B cell (primary cell): ENCODE measurements at regions of chr6 and their contacts with region 1.

Region 1: DNA sequence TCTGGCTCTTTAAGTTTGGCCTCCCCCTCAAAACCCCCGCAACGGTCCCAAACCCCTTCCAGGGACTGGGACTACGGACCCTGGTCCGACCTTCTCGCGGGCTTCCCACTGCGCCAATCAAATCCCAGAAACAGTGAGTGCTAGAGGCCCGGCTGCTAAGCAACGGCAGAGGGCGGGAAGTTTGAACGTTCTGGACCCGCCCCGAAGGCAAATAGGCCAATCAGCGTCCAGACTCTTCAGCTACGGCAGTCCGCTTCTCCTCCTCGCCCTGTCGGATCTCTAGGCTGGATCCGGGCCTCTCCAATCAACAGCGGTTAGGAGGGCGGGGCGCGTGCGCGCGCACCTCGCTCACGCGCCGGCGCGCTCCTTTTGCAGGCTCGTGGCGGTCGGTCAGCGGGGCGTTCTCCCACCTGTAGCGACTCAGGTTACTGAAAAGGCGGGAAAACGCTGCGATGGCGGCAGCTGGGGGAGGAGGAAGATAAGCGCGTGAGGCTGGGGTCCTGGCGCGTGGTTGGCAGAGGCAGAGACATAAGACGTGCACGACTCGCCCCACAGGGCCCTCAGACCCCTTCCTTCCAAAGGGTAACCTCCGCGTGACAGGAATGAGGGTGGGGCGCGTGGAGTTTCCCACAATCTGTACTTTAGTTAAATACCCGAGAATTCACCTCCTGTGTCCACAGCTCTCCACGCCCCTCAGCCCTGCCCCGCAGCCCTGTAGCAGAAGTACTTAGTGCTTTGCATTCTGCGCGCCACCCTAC is at the start of gene MSH5:
- DNase-seq: peak; percentile 96
- ATAC-seq: peak; percentile 82
- H3K4me3 ChIP-seq: peak within 1 kb of the TSS; percentile 71 to 90 (median 81)
- H3K4me3 Mint-ChIP-seq: peak within 1 kb of the TSS; percentile 100
- H3K27ac ChIP-seq: peak within 1 kb of the TSS; percentile 81 to 96
- H3K27ac Mint-ChIP-seq: peak within 1 kb of the TSS; percentile 91
- H3K4me1 ChIP-seq: peaks cover 39 to 42% of the 10 kb centered on the region in 2 donors
- H3K4me1 Mint-ChIP-seq: peaks cover 60% of the 10 kb centered on the region
- H3K27me3 ChIP-seq: no peaks in the 10 kb centered on the region
- H3K27me3 Mint-ChIP-seq: no peaks in the 10 kb centered on the region
- CTCF ChIP-seq: no peak
- total RNA-seq, gene MSH5: 49.9 and 50.1 TPM in 2 replicates

Region 2: DNA sequence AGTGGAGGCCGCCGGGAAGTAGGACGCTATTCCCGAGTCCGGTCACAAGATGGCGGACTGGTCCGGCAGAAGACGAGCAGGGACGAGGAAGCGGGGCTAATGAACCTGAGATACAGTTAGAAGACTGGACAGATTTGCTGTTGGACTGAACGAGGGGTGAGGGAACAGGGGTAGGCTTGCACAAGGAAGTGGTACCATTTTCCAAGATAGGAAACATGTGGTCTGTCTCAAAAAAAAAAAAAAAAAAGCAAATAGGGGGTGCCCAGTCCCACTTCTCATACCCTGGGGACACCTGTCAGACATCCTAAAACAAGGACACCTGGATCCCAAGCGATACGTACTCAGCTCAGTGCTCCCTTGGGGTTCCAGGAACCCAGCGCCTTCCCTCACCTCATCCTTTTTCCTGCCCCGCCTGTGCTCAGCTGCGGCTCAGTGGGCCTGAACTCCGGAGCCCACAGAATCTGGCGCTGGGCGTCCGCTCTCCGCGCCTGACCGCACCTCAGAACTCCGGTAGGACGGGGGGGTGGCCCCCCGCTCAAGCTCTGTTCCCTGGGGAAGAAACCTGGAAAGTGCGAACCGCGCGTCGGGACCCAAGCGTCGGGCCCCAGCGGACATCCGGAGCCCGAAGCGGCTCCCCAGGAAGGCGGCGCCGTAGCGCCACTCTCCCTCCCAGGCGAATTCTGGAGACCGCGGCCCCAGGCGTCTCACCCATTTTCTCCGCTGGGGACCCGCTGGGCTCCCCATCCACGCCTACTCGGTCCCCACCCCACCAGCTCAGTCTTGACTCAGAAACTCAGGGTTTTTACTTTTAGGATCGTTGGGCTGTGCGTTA is 58.8 kb before region 1 on chr6 and contains the start of gene LY6G5C:
- CTCF ChIA-PET with region 1: interaction called, 4 read pairs
- POLR2A ChIA-PET with region 1: no interaction called
- intact Hi-C with region 1: loop called (anchors 2 kb)
- DNase-seq: peak; percentile 79
- ATAC-seq: peak; percentile 78
- H3K4me3 ChIP-seq: peak within 1 kb of the TSS; percentile 44 to 69 (median 53)
- H3K4me3 Mint-ChIP-seq: peak within 1 kb of the TSS; percentile 88
- H3K27ac ChIP-seq: peak within 1 kb of the TSS in 1 of 2 donors; percentile 50
- H3K27ac Mint-ChIP-seq: peak within 1 kb of the TSS; percentile 57
- H3K4me1 ChIP-seq: peaks cover 19 to 40% of the 10 kb centered on the region in 2 donors
- H3K4me1 Mint-ChIP-seq: peaks cover 43% of the 10 kb centered on the region
- H3K27me3 ChIP-seq: no peaks in the 10 kb centered on the region
- H3K27me3 Mint-ChIP-seq: no peaks in the 10 kb centered on the region
- CTCF ChIP-seq: peak; percentile 55
- total RNA-seq, gene LY6G5C: 0.76 and 2.1 TPM in 2 replicates

Region 3: DNA sequence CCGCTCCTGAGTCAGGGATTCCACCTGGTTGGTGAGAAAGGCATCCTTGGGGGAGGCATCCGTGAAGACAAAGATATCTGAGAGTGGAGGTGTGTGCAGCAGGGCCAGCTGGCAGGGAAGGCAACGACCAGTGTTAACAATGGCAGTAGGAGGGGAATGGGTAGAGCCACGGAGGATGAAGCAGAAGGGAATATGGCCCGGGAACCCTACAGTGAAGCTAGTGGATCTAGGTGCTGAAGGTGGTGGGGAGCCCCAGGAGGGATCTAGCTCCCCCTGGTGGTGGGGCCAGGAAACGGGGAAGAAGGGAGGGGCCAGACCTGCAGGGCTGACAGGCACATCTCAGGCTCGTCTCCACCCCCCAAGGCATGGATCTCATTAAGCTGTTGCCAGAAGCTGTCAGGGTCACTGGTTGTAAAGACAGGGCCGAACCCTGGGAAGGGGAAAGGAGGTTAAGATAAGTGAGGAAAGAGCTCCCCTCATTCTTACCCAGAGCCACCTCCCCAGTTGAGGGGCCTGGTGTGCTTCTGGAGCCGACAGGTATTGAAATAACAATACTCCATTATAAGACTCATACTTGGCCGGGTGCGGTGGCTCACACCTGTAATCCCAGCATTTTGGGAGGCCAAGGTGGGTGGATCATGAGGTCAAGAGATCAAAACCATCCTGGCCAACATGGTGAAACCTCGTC is 30.0 kb after region 1 on chr6:
- CTCF ChIA-PET with region 1: interaction called, 51 read pairs
- POLR2A ChIA-PET with region 1: interaction called, 8 read pairs
- intact Hi-C with region 1: no loop called
- DNase-seq: peak; percentile 87
- ATAC-seq: peak; percentile 98
- H3K4me3 ChIP-seq: no peak overlapping the region
- H3K4me3 Mint-ChIP-seq: no peak overlapping the region
- H3K27ac ChIP-seq: no peak overlapping the region
- H3K27ac Mint-ChIP-seq: peak overlapping the region; percentile 32
- H3K4me1 ChIP-seq: peaks cover 0 to 9% of the 10 kb centered on the region in 2 donors
- H3K4me1 Mint-ChIP-seq: peaks cover 13% of the 10 kb centered on the region
- H3K27me3 ChIP-seq: no peaks in the 10 kb centered on the region
- H3K27me3 Mint-ChIP-seq: no peaks in the 10 kb centered on the region
- CTCF ChIP-seq: peak; percentile 74

Region 4: GRCh38 chr6:31806465-31807272 is 66.9 kb after region 1 on chr6 and contains the start of gene LSM2:
- CTCF ChIA-PET with region 1: interaction called, 8 read pairs
- POLR2A ChIA-PET with region 1: interaction called, 4 read pairs
- intact Hi-C with region 1: loop called (anchors 2 kb)
- DNase-seq: peak; percentile 97
- ATAC-seq: peak; percentile 98
- H3K4me3 ChIP-seq: peak within 1 kb of the TSS; percentile 68 to 84 (median 84)
- H3K4me3 Mint-ChIP-seq: peak within 1 kb of the TSS; percentile 87
- H3K27ac ChIP-seq: peak within 1 kb of the TSS; percentile 77 to 93
- H3K27ac Mint-ChIP-seq: peak within 1 kb of the TSS; percentile 88
- H3K4me1 ChIP-seq: peaks cover 8 to 11% of the 10 kb centered on the region in 2 donors
- H3K4me1 Mint-ChIP-seq: peaks cover 16% of the 10 kb centered on the region
- H3K27me3 ChIP-seq: no peaks in the 10 kb centered on the region
- H3K27me3 Mint-ChIP-seq: no peaks in the 10 kb centered on the region
- CTCF ChIP-seq: peak; percentile 34
- total RNA-seq, gene LSM2: 45.3 and 52.4 TPM in 2 replicates

Region 5: DNA sequence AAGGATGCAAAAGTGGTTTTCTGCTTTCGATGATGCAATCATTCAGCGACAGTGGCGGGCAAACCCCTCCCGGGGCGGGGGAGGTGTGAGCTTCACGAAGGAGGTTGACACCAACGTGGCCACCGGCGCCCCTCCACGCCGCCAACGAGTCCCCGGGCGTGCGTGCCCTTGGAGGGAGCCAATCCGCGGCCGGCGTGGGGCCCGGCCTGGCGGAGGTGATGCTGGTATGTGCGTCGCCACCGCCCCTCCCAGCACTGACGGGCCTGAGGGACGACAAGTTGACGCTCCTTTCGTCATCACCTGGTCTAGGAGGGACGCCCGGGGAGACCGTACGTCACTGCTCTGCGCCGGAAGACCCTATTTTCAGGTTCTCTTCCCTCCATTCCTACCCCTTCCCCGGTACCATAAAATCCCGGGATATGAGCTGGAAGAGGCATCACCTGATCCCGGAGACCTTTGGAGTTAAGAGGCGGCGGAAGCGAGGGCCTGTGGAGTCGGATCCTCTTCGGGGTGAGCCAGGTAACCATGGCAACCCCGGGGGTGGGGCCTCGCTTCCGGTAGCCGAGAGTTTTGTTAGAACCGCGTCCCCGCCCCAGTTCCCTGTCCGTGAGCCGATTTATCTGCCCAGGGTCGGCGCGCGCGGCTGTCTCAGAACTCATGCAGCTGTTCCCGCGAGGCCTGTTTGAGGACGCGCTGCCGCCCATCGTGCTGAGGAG is 232.3 kb after region 1 on chr6 and contains the start of gene DXO:
- CTCF ChIA-PET with region 1: no interaction called
- POLR2A ChIA-PET with region 1: no interaction called
- intact Hi-C with region 1: loop called (anchors 10 kb)
- DNase-seq: peak; percentile 100
- ATAC-seq: peak; percentile 89
- H3K4me3 ChIP-seq: peak within 1 kb of the TSS; percentile 51 to 92 (median 80)
- H3K4me3 Mint-ChIP-seq: peak within 1 kb of the TSS; percentile 98
- H3K27ac ChIP-seq: peak within 1 kb of the TSS; percentile 96 to 100
- H3K27ac Mint-ChIP-seq: peak within 1 kb of the TSS; percentile 100
- H3K4me1 ChIP-seq: peaks cover 18 to 23% of the 10 kb centered on the region in 2 donors
- H3K4me1 Mint-ChIP-seq: peaks cover 34% of the 10 kb centered on the region
- H3K27me3 ChIP-seq: no peaks in the 10 kb centered on the region
- H3K27me3 Mint-ChIP-seq: no peaks in the 10 kb centered on the region
- CTCF ChIP-seq: no peak
- total RNA-seq, gene DXO: 33.9 and 36.1 TPM in 2 replicates